PC-3 (cell line): ENCODE measurements at regions of chr12 and their contacts with region 1.

Region 1: GRCh38 chr12:66035288-66035966 is 95.1 kb downstream of the LLPH start:
- DNase-seq: peak; percentile 79
- ATAC-seq: peak; percentile 45; the same call in 1 of the 2 replicates
- H3K4me3 ChIP-seq: no peak overlapping the region
- H3K27ac ChIP-seq: 0 out of 2 replicates have a peak overlapping the region, but pooled peaks have one; percentile 6
- H3K4me1 ChIP-seq: peaks cover 19% of the 10 kb centered on the region
- H3K27me3 ChIP-seq: no peaks in the 10 kb centered on the region
- CTCF ChIP-seq: peak; percentile 79

Region 2: GRCh38 chr12:66014818-66015217 is 20.6 kb before region 1 on chr12:
- CTCF ChIA-PET with region 1: no interaction called
- POLR2A ChIA-PET with region 1: no interaction called
- intact Hi-C with region 1: no loop called
- DNase-seq: peak; percentile 50
- ATAC-seq: peak; percentile 11; the same call in 1 of the 2 replicates
- H3K4me3 ChIP-seq: no peak overlapping the region
- H3K27ac ChIP-seq: no peak overlapping the region
- H3K4me1 ChIP-seq: peaks cover 9% of the 10 kb centered on the region; the same call in 1 of the 2 replicates
- H3K27me3 ChIP-seq: no peaks in the 10 kb centered on the region
- CTCF ChIP-seq: no peak

Region 3: DNA sequence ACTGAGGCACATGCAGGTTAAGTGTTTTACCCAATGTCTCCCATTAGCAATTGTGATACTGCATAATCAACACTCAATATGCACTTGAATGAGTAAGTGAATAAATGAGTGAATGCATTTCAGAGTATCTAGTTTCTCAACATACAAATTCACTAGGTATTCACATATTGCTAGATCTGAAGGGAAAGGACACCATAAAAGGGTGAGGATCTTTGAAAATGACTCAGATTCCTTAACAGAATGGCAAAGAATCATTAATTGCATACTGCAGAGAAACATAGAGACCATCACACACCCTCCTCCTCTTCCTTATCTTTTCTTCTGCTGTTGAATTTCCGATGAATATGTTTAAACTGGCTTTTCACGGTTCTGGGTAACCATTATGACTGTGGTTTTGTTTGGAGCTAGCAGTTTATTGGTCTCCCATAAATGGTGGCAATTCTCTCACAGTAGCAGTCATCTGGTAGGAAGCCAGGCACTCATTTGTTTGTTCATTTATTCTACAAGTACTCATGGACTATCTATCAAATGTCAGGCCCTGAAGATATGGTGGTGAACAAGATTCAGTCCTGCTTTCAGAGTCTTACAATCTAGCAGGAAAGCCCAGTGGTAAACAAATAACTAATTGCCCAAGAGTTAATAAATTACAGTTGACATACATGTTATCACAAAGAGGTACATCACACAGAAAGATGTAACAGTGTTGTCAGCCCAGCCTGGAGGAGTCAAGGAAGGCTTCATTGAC is 24.9 kb after region 1 on chr12:
- CTCF ChIA-PET with region 1: no interaction called
- POLR2A ChIA-PET with region 1: interaction called, 15 read pairs
- intact Hi-C with region 1: no loop called
- DNase-seq: no peak
- ATAC-seq: no peak
- H3K4me3 ChIP-seq: no peak overlapping the region
- H3K27ac ChIP-seq: no peak overlapping the region
- H3K4me1 ChIP-seq: no peaks in the 10 kb centered on the region
- H3K27me3 ChIP-seq: 0 out of 2 replicates have a peak, but pooled peaks cover 9% of the 10 kb centered on the region
- CTCF ChIP-seq: no peak